Head of caudate nucleus (tissue), 42 donors: ENCODE measurements at regions of chr7 and their contacts with region 1.

Region 1: GRCh38 chr7:34823640-34824258 is 165.7 kb downstream of the NPSR1 start:
- DNase-seq: peak in 41 of 42 donors; percentile 43 to 93 (median 75)

Region 2: GRCh38 chr7:34564091-34564490 is 259.7 kb before region 1 on chr7:
- intact Hi-C with region 1: no loop called
- DNase-seq: no peak

Region 3: GRCh38 chr7:34928049-34928448 is 104.3 kb after region 1 on chr7:
- intact Hi-C with region 1: loop called (anchors 10 kb)
- DNase-seq: peak; percentile 35 to 97 (median 84)

Region 4: DNA sequence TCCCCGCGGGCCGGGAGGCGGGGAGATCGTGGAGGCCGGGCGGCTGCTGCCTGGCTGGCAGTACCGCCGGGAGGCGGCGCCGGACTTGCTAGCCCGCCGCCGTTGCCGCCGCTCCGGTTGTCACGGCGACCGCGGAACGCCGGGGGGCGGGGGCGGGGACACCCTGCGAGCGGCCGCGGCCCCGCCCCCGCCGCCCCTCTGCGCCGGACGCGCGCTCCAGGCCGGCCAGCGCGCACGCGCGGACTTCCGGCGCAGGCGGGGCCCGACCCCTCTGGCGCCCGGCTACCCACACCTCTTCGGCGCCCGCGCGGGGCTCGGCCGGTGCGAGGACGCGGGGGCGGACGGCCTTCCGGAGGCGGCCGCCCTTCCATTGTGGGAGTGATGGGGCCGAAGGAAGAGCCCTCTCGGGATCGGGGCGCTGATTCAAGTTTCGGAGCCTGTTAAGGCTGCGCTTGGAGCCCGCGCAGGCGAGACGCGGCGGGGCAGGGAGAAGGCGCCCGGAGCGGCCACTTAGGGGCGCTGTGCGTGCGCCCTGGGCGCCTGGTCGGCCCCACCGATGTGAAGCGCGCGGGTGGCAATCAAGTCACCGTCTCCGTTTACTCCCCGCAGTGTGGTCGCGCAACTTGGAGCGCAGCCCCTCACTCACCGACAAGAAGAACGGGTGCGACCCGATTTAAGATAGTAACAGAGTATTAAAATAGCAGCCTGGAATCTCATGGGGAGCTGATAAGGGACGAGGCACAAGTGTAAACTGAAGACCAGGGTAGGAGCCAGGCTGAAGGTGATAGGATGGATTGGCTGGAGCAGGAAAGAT is 214.0 kb after region 1 on chr7:
- intact Hi-C with region 1: loop called (anchors 5 kb)
- DNase-seq: peak; percentile 75 to 97 (median 93)